ENCODE measurements at regions of chr6 and their contacts with region 1.

Region 1: GRCh38 chr6:36094753-36095496 is 35.4 kb upstream of the MAPK13 start:
- DNase-seq: peak; percentile 91
- H3K4me3 ChIP-seq: no peak overlapping the region
- H3K27ac ChIP-seq: no peak overlapping the region
- H3K4me1 ChIP-seq: peaks cover 12% of the 10 kb centered on the region
- H3K27me3 ChIP-seq: no peaks in the 10 kb centered on the region
- CTCF ChIP-seq: peak; percentile 93 to 95 (median 94)
- POLR2A ChIP-seq: no peak

Region 2: GRCh38 chr6:36027501-36028087 is 67.3 kb before region 1 on chr6 and contains the start of gene MAPK14:
- intact Hi-C with region 1: loop called (anchors 5 kb)
- DNase-seq: peak; percentile 100
- H3K4me3 ChIP-seq: peak within 1 kb of the TSS; percentile 93 to 98
- H3K27ac ChIP-seq: peak within 1 kb of the TSS; percentile 91 to 94
- H3K4me1 ChIP-seq: peaks cover 5% of the 10 kb centered on the region
- H3K27me3 ChIP-seq: no peaks in the 10 kb centered on the region
- CTCF ChIP-seq: peak in 2 of 3 experiments; percentile 81 to 98
- POLR2A ChIP-seq: peak; percentile 87
- total RNA-seq, gene MAPK14: 57.3 to 58.3 TPM

Region 3: GRCh38 chr6:36169023-36170007 is 74.4 kb after region 1 on chr6:
- intact Hi-C with region 1: no loop called
- DNase-seq: no peak
- H3K4me3 ChIP-seq: no peak overlapping the region
- H3K27ac ChIP-seq: no peak overlapping the region
- H3K4me1 ChIP-seq: peaks cover 2% of the 10 kb centered on the region
- H3K27me3 ChIP-seq: no peaks in the 10 kb centered on the region
- CTCF ChIP-seq: no peak
- POLR2A ChIP-seq: no peak